Activated CD4-positive, alpha-beta T cell treated with anti-CD3 and anti-CD28 coated beads, Interleukin-2, amount 10 ng/mL, durations not matched to agents 7 days and 5 days (primary cell): ENCODE measurements at regions of chr22 and their contacts with region 1.

Region 1: GRCh38 chr22:37121887-37122591 is 12.5 kb upstream of the TMPRSS6 start:
- DNase-seq: peak; percentile 96
- H3K4me3 Mint-ChIP-seq: peak overlapping the region; percentile 65
- H3K27ac Mint-ChIP-seq: peak overlapping the region; percentile 98
- H3K4me1 Mint-ChIP-seq: peaks cover 85% of the 10 kb centered on the region
- H3K27me3 Mint-ChIP-seq: no peaks in the 10 kb centered on the region

Region 2: DNA sequence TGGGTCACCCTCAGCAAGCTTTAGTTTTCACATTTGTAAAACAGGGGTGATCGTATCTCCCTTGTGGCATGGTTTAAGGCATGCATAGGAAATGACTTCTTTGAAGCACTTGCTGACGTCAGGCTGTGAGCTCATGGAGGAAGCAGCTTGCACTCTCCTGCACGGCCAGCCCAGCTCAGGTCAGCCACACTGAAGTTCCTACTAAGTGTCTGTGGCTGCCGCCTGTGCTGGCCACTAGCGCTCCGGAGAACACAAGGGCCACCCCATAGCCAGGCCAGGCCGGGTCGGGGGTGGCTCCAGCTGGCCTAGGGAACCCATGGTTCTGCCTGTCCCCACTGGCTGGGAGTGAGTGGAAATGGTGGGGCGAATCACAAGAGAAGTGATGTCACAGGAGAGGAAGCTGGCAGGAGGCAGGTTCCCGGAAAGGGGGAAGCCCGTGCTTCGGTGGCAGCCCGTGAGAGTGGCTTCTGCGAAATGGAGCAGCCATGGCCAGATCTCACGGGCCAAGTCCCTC is 42.3 kb before region 1 on chr22:
- CTCF ChIA-PET with region 1: interaction called, 8 read pairs
- POLR2A ChIA-PET with region 1: interaction called, 14 read pairs
- DNase-seq: peak; percentile 92
- H3K4me3 Mint-ChIP-seq: peak overlapping the region; percentile 60
- H3K27ac Mint-ChIP-seq: peak overlapping the region; percentile 97
- H3K4me1 Mint-ChIP-seq: peaks cover 84% of the 10 kb centered on the region
- H3K27me3 Mint-ChIP-seq: no peaks in the 10 kb centered on the region

Region 3: GRCh38 chr22:37109242-37109917 is 12.7 kb before region 1 on chr22 and contains the start of gene TMPRSS6:
- CTCF ChIA-PET with region 1: interaction called, 25 read pairs
- POLR2A ChIA-PET with region 1: interaction called, 3 read pairs
- DNase-seq: no peak
- H3K4me3 Mint-ChIP-seq: no peak within 1 kb of the TSS
- H3K27ac Mint-ChIP-seq: no peak within 1 kb of the TSS
- H3K4me1 Mint-ChIP-seq: peaks cover 7% of the 10 kb centered on the region
- H3K27me3 Mint-ChIP-seq: no peaks in the 10 kb centered on the region
- total RNA-seq, gene TMPRSS6: 0.50 to 0.73 TPM

Region 4: DNA sequence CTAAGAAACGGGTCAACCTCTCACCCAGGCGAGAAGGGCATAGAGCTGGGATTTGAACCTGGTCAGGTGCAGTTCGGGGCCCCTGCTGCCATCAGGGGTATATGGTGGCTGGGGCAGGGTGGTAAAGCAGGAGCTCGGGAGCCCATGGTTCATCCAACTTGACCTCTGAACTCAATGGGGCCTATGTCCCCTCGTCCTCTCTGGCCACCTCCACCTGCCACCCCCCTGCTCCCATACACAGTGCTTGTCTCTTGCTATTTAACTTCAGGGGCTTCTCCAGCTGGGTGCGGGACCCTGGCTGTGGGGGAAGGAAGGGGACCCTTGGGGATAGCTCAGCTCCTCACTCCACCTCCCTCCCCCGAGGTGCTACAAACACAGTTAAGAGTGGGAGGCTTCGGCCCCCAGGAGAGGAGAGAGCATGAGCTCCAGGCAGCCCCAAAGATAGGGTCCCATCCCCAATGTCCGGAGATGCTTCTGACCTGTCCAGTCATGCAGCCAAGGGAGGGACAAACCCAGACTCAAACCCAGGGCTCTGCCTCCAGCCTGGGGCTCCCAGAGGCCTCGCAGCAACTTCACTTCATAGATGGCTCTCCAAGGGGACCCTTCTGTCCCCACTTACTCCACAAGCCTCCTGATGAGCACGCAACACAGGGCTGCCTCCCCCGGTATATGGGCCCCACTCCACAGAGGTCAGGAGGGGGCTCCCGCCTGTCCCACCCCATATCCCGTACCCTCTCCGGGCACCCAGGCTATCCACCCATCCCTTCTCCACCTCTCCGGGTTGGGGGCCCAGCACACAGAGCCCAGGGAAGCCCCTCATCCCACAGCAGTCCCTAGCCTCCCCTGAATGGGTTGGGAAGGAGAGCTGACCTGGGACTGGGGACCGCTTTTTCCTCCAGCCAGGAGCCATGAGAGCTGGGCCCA is 27.0 kb after region 1 on chr22:
- CTCF ChIA-PET with region 1: interaction called, 71 read pairs
- POLR2A ChIA-PET with region 1: interaction called, 4 read pairs
- DNase-seq: no peak
- H3K4me3 Mint-ChIP-seq: peak overlapping the region; percentile 87
- H3K27ac Mint-ChIP-seq: peak overlapping the region; percentile 91
- H3K4me1 Mint-ChIP-seq: peaks cover 60% of the 10 kb centered on the region
- H3K27me3 Mint-ChIP-seq: no peaks in the 10 kb centered on the region

Region 5: DNA sequence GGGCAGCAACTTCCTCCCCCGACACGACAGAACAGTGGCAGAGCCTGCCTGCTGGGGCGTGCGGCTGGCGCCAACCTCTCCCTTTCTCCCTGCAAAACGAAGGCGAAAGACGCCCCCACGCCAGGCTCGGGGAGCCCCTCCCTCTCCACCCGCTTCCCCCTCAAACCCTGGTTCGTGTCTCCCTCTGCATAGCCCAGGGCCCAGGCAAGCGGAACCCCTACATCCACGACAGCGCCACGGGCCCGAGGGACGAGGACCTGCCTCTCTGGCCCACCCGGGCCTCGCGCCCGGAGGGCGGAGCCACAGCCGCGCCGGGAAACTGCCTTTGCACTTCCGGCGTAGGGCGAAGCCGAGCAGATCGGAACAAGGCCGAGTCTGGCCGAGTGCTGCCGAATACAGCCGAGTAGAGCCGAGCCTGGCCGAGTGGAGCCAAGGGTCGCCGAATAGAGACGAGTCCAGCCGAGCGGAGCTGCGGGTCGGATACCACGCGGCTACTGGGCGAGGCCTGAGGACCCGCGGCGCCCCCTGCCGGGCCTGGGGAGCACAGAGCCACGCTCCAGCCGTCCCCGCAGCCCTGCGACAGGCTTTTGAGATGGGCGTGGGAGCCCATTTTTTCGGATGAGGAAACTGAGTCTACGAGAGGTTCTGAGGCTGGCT is 77.2 kb after region 1 on chr22:
- CTCF ChIA-PET with region 1: interaction called, 13 read pairs
- POLR2A ChIA-PET with region 1: no interaction called
- DNase-seq: peak; percentile 100
- H3K4me3 Mint-ChIP-seq: peak overlapping the region; percentile 94
- H3K27ac Mint-ChIP-seq: peak overlapping the region; percentile 95
- H3K4me1 Mint-ChIP-seq: peaks cover 42% of the 10 kb centered on the region
- H3K27me3 Mint-ChIP-seq: no peaks in the 10 kb centered on the region